AG04450 (cell line): ENCODE measurements at regions of chr9 and their contacts with region 1.

Region 1: GRCh38 chr9:36995927-36996705 is 38.0 kb downstream of the PAX5 start:
- DNase-seq: peak; percentile 15
- H3K4me3 ChIP-seq: no peak overlapping the region; the same call in 1 of the 2 replicates
- H3K27ac ChIP-seq: no peak overlapping the region
- H3K27me3 ChIP-seq: peaks cover 30% of the 10 kb centered on the region
- CTCF ChIP-seq: peak; percentile 80

Region 2: DNA sequence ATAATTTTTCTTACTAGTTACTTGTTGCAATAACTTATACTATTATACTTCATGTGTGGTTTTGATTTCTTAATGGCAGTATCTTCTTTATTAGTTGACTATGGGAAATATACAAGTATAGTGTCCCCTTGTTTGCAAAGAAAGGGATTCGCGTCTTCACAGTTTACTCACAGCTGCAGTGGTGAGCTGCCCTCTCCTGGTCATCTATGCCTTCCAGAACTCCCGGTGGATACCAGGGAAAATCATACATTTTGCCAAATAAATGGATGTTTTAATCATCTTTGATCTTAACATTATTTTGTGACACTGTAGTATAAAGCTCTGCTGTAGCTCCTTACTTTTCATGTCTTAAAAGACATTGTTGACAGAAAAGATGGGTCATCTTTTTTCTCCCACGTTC is 266.3 kb after region 1 on chr9:
- CTCF ChIA-PET with region 1: interaction called, 11 read pairs
- POLR2A ChIA-PET with region 1: no interaction called
- DNase-seq: peak; percentile 6
- H3K4me3 ChIP-seq: no peak overlapping the region
- H3K27ac ChIP-seq: no peak overlapping the region
- H3K27me3 ChIP-seq: no peaks in the 10 kb centered on the region
- CTCF ChIP-seq: peak; percentile 77

Region 3: GRCh38 chr9:37329576-37329975 is 333.5 kb after region 1 on chr9:
- CTCF ChIA-PET with region 1: interaction called, 13 read pairs
- POLR2A ChIA-PET with region 1: no interaction called
- DNase-seq: no peak
- H3K4me3 ChIP-seq: no peak overlapping the region
- H3K27ac ChIP-seq: no peak overlapping the region
- H3K27me3 ChIP-seq: no peaks in the 10 kb centered on the region
- CTCF ChIP-seq: peak; percentile 52

Region 4: DNA sequence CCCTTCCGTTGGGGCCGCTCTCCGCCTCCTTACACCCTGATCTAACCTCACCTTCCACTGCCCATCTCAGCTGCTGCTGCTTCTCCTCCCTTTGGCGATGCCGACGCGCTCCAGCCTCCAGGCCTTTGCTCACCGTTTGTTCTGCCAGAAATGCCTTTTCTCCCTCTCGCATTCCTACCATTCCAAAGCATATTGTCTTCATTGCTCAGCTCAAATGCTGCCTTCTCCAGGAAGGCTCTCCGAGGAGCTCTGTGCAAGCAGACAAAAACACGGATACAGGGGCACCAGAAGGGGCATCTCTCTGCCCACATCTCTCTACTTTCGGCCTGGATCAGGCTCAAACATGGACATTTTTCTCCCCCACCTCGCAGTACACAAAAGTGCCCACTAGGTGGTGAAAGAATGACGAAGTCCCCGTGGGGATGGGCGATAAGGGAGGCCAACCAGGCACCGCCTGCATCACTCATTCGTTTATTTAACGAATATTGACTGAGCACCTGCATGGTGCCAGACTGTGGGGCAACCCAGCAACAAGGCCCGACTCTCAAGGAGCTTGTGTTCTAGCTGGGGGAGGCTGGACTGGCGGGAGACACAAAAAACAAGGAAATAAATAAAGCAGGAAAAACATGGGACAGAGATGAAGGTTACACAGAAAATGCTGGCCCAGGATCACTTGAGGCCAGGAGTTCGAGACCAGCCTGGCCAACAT is 419.0 kb after region 1 on chr9:
- CTCF ChIA-PET with region 1: interaction called, 20 read pairs
- POLR2A ChIA-PET with region 1: no interaction called
- DNase-seq: peak; percentile 30
- H3K4me3 ChIP-seq: no peak overlapping the region; the same call in 1 of the 2 replicates
- H3K27ac ChIP-seq: peak overlapping the region; percentile 75
- H3K27me3 ChIP-seq: no peaks in the 10 kb centered on the region
- CTCF ChIP-seq: peak; percentile 84